Prostate gland (tissue), 2 donors: ENCODE measurements at regions of chr16 and their contacts with region 1.

Region 1: GRCh38 chr16:29694384-29695195 is 15.6 kb downstream of the QPRT start:
- DNase-seq: no peak
- H3K4me3 ChIP-seq: no peak overlapping the region
- H3K27ac ChIP-seq: no peak overlapping the region
- H3K4me1 ChIP-seq: no peaks in the 10 kb centered on the region
- H3K27me3 ChIP-seq: no peaks in the 10 kb centered on the region
- CTCF ChIP-seq: no peak
- POLR2A ChIP-seq: no peak

Region 2: DNA sequence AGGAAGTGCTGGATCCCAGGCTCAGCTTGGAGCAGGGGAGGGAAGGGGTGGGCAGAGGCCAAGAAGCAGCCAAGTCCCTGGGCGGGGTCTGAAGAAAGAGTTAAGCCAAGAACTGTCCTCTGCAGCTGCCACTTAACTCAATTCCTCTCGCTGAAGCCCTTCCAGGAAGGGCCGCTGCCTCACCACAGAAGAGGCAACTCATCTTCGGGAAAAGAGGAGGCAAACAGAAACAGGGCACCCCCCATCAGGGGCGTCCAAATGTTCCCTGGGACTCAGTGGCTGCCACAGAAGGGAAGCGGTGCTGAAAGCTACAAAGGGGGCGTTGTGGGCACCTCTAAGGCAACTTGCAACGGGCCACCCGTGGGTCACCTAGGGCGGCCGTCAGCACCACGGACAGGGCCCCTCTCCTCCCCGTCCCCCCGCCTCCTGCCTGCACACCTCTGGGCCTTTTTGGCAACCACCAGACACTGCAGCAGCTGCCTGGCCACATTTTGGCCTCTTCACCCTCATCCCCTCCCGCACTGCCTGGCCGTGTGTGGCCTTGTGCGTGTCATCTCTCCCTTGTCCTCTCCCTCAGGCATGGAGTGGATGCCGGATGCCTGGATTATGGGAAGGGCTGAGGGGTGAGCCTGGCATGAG is 334.0 kb after region 1 on chr16:
- intact Hi-C with region 1: loop called (anchors 10 kb)
- DNase-seq: no peak
- H3K4me3 ChIP-seq: no peak overlapping the region
- H3K27ac ChIP-seq: no peak overlapping the region
- H3K4me1 ChIP-seq: peaks cover 5% of the 10 kb centered on the region
- H3K27me3 ChIP-seq: peaks cover 13% of the 10 kb centered on the region
- CTCF ChIP-seq: no peak
- POLR2A ChIP-seq: no peak